MCF 10A (cell line): ENCODE measurements at regions of chr1 and their contacts with region 1.

Region 1: DNA sequence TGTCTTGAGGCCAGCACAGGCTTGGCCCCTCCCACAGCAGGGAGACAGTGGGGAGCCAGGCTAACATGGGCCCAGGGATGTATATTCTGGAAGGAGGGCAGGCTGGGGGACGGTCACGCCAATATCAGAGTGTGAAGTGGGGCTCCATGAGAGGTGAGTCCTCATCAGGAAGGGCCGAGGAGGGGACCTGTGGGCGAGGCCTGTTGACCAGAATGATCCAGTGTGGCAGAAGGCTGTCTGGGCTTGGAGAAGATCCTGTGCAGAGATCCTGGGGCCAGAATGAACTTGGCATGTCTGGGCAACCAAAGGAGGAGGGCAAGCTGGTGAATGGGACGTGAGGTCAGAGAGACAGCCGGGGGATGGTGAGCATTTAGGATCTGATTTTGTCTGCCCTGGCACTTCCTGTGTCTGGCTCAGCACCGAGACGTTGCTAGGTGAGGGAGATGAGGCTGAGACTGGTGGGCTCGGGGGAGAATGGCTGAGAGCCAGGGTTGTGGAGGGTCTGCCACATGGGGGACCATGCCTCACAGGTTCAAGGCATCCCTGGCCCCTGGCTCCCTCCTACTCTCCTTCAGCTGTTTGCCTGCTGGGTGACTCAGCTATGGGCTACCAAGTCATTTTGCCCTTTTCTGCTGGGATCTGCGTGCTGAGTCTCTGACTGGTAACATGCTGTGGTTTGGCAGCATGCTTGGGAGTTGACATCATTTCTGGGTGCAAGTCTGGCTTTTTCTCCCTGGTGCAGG is 17.3 kb downstream of the GALNT2 start:
- DNase-seq: peak; percentile 100
- H3K4me3 Mint-ChIP-seq: peak overlapping the region; percentile 46
- H3K27ac Mint-ChIP-seq: peak overlapping the region; percentile 80
- H3K4me1 Mint-ChIP-seq: peaks cover 71% of the 10 kb centered on the region
- H3K27me3 Mint-ChIP-seq: no peaks in the 10 kb centered on the region
- CTCF ChIP-seq: no peak

Region 2: DNA sequence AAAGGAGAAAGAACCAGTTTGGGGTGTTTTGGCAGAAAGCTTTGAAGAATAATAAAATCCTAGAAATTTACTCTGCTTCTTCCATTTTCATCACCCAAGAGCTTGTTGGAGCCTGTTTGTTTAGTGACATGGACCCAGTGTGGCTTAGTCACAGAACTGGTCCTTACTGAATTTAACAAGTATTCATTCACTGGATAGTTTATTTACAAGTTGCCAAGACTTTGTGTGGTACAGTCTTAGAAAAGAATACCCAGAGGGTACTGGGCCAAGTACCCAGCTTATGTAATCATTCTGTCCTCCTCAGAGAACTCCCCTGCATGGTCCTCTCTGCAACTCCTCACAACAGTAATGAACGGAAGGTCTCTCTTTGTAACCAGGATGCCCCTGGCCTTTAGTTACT is 797.0 kb before region 1 on chr1:
- CTCF ChIA-PET with region 1: no interaction called
- POLR2A ChIA-PET with region 1: no interaction called
- intact Hi-C with region 1: no loop called
- DNase-seq: peak; percentile 58
- H3K4me3 Mint-ChIP-seq: no peak overlapping the region
- H3K27ac Mint-ChIP-seq: no peak overlapping the region
- H3K4me1 Mint-ChIP-seq: peaks cover 32% of the 10 kb centered on the region
- H3K27me3 Mint-ChIP-seq: no peaks in the 10 kb centered on the region
- CTCF ChIP-seq: no peak

Region 3: GRCh38 chr1:229579059-229579673 is 505.1 kb before region 1 on chr1:
- CTCF ChIA-PET with region 1: no interaction called
- POLR2A ChIA-PET with region 1: no interaction called
- intact Hi-C with region 1: loop called (anchors 10 kb)
- DNase-seq: peak; percentile 38
- H3K4me3 Mint-ChIP-seq: no peak overlapping the region
- H3K27ac Mint-ChIP-seq: no peak overlapping the region
- H3K4me1 Mint-ChIP-seq: peaks cover 11% of the 10 kb centered on the region
- H3K27me3 Mint-ChIP-seq: no peaks in the 10 kb centered on the region
- CTCF ChIP-seq: no peak

Region 4: DNA sequence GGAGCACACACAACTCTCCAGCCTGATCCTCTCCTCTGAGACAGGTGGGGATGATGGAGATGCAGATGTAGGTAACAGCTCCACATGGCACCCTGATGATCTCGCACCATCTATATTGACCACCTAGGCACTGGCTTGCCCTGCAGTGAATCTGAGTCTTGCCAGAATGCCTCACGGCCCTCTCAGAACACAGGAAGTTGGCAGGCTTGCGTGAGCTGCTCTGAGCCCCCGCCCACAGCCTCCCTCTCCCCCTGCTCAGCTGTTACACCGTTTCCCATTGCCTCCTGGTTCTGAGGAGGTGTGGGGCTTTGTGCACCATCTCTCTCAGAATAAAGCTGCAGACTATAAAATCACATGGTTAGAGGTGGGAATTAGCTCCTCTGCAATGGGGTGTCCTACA is 410.3 kb before region 1 on chr1:
- CTCF ChIA-PET with region 1: interaction called, 10 read pairs
- POLR2A ChIA-PET with region 1: no interaction called
- intact Hi-C with region 1: no loop called
- DNase-seq: no peak
- H3K4me3 Mint-ChIP-seq: no peak overlapping the region
- H3K27ac Mint-ChIP-seq: no peak overlapping the region
- H3K4me1 Mint-ChIP-seq: no peaks in the 10 kb centered on the region
- H3K27me3 Mint-ChIP-seq: no peaks in the 10 kb centered on the region
- CTCF ChIP-seq: no peak

Region 5: GRCh38 chr1:229843627-229844238 is 240.6 kb before region 1 on chr1:
- CTCF ChIA-PET with region 1: interaction called, 11 read pairs
- POLR2A ChIA-PET with region 1: interaction called, 8 read pairs
- intact Hi-C with region 1: no loop called
- DNase-seq: peak; percentile 91
- H3K4me3 Mint-ChIP-seq: peak overlapping the region; percentile 5
- H3K27ac Mint-ChIP-seq: peak overlapping the region; percentile 58
- H3K4me1 Mint-ChIP-seq: peaks cover 37% of the 10 kb centered on the region
- H3K27me3 Mint-ChIP-seq: no peaks in the 10 kb centered on the region
- CTCF ChIP-seq: no peak

Region 6: DNA sequence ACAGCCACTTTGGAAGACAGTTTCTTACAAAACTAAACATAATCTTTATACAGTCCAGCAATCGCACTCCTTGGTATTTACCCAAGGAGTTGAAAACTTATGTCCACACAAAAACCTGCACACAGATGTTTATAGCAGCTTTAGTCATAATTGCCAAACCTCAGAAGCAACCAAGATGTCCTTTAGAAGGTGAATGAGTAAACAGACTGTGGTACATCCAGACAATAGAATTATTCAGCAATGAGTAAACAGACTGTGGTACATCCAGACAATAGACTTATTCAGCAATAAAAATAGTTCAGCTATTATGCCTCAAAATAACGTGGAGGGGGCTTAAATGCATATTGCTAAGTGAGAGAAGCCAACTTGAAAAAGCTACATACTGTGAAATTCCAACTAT is 104.3 kb before region 1 on chr1:
- CTCF ChIA-PET with region 1: no interaction called
- POLR2A ChIA-PET with region 1: no interaction called
- intact Hi-C with region 1: no loop called
- DNase-seq: peak; percentile 53
- H3K4me3 Mint-ChIP-seq: no peak overlapping the region
- H3K27ac Mint-ChIP-seq: no peak overlapping the region
- H3K4me1 Mint-ChIP-seq: no peaks in the 10 kb centered on the region
- H3K27me3 Mint-ChIP-seq: no peaks in the 10 kb centered on the region
- CTCF ChIP-seq: no peak

Region 7: GRCh38 chr1:230011333-230012092 is 72.8 kb before region 1 on chr1:
- CTCF ChIA-PET with region 1: no interaction called
- POLR2A ChIA-PET with region 1: no interaction called
- intact Hi-C with region 1: no loop called
- DNase-seq: peak; percentile 17
- H3K4me3 Mint-ChIP-seq: no peak overlapping the region
- H3K27ac Mint-ChIP-seq: no peak overlapping the region
- H3K4me1 Mint-ChIP-seq: no peaks in the 10 kb centered on the region
- H3K27me3 Mint-ChIP-seq: peaks cover 11% of the 10 kb centered on the region
- CTCF ChIP-seq: no peak

Region 8: DNA sequence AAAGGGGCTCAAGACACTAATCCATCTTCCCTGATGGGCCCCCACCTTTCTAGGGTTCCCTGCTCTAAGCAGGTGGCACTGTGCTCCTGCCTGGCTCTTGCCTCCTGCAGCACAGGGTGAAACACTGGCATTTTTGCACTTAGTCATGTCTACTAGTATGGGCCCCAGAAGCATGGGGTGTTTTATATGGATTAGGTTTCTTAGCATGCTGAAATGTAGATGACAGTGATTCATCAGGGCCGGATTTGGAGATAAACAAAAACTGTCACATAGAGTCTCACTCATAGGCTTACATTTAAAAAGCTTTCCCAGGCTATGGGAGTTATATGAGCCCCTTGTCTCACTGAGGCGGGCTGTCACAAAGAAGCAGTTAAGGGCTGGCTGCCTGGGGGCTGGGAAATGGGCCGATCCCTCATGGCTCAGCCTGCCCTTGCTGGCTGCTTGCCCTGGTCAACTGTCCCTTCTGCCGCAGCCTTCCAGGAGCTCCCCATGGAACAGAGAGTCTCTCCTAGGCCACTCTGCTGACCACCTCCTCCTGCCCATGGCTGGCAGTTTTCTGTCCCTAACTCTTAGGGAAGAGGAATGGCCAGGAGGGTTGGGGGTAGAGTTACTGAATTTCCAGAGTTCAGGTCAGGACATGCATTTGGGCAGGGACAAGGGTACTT is 10.8 kb before region 1 on chr1:
- CTCF ChIA-PET with region 1: interaction called, 82 read pairs
- POLR2A ChIA-PET with region 1: interaction called, 166 read pairs
- intact Hi-C with region 1: no loop called
- DNase-seq: peak; percentile 88
- H3K4me3 Mint-ChIP-seq: peak overlapping the region; percentile 2
- H3K27ac Mint-ChIP-seq: peak overlapping the region; percentile 72
- H3K4me1 Mint-ChIP-seq: peaks cover 71% of the 10 kb centered on the region
- H3K27me3 Mint-ChIP-seq: no peaks in the 10 kb centered on the region
- CTCF ChIP-seq: no peak

Region 9: DNA sequence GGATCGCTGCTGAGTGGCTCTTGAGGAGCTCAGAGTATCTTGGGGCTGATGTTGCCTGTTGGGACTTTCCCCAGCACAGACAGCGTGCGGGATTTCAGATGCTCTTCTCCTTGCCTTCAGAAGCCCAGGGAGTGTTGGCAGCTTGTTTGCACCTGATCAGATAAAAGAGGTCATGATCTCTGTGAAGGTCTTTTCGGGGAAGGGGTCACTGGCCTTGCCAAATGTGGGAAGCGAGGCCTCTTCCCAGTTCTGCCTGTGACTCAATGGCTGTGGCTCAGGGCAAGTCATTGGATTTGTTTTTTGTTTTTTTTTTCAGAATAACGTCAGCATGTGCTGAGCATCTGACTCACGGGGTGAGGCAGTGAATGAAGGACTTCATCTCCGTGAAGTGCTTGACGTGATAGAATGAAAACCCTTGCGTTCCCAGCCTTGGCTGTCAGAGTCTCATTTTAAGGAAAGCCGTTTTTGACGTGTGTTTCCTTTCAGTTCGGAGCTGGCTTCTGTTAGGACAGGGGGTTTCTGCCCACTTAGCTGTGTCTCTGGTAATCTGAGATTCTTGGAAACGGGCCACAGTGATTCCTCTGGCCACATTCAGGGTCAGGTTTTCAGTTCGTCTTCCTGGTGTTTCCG is 29.4 kb after region 1 on chr1:
- CTCF ChIA-PET with region 1: interaction called, 6 read pairs
- POLR2A ChIA-PET with region 1: interaction called, 162 read pairs
- intact Hi-C with region 1: no loop called
- DNase-seq: peak; percentile 98
- H3K4me3 Mint-ChIP-seq: peak overlapping the region; percentile 62
- H3K27ac Mint-ChIP-seq: peak overlapping the region; percentile 98
- H3K4me1 Mint-ChIP-seq: peaks cover 47% of the 10 kb centered on the region
- H3K27me3 Mint-ChIP-seq: no peaks in the 10 kb centered on the region
- CTCF ChIP-seq: no peak

Region 10: GRCh38 chr1:230568008-230568407 is 483.7 kb after region 1 on chr1:
- CTCF ChIA-PET with region 1: no interaction called
- POLR2A ChIA-PET with region 1: no interaction called
- intact Hi-C with region 1: no loop called
- DNase-seq: peak; percentile 70
- H3K4me3 Mint-ChIP-seq: no peak overlapping the region
- H3K27ac Mint-ChIP-seq: peak overlapping the region; percentile 50
- H3K4me1 Mint-ChIP-seq: peaks cover 27% of the 10 kb centered on the region
- H3K27me3 Mint-ChIP-seq: no peaks in the 10 kb centered on the region
- CTCF ChIP-seq: peak; percentile 37